ENCODE measurements at regions of chr3 and their contacts with region 1.

Region 1: GRCh38 chr3:141796081-141796888 is 33.1 kb downstream of the GRK7 start:
- DNase-seq: peak; percentile 74
- H3K4me3 Mint-ChIP-seq: peak overlapping the region; percentile 79
- H3K27ac Mint-ChIP-seq: peak overlapping the region; percentile 99
- H3K4me1 Mint-ChIP-seq: peaks cover 47% of the 10 kb centered on the region
- H3K27me3 Mint-ChIP-seq: peaks cover 3% of the 10 kb centered on the region

Region 2: GRCh38 chr3:141553055-141553454 is 243.2 kb before region 1 on chr3:
- intact Hi-C with region 1: loop called (anchors 2 kb)
- DNase-seq: peak; percentile 35
- H3K4me3 Mint-ChIP-seq: peak overlapping the region; percentile 38
- H3K27ac Mint-ChIP-seq: peak overlapping the region; percentile 93
- H3K4me1 Mint-ChIP-seq: peaks cover 52% of the 10 kb centered on the region
- H3K27me3 Mint-ChIP-seq: no peaks in the 10 kb centered on the region

Region 3: DNA sequence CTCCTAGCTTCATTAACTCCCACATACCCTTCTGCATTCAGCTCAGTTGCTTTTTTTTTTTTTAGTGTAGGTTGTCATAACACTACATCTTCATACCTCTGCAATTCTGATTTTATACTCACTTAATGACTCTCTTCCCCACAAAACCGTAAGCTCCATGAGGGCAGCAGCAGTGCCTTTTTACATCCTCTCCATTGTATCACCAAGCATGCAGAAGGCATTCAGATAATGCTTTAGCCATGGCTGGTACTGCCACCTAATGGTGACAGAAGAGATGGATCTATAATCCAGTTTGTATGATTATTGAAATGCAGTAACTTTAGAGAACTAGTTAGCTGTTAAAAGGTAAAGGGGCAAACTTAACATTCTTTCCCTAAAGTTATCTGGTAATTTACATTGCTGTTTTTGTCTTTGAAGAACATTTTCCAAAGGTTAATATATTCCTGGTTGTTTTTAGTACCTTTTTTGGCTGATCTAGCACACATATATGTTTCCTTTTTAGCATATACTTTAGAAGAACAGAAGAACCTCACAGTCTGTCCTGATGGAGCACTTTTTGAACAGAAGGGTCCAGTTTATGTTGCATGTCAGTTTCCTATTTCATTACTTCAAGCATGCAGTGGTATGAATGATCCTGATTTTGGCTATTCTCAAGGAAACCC is 117.0 kb after region 1 on chr3:
- intact Hi-C with region 1: loop called (anchors 1 kb)
- DNase-seq: peak; percentile 26
- H3K4me3 Mint-ChIP-seq: no peak overlapping the region
- H3K27ac Mint-ChIP-seq: no peak overlapping the region
- H3K4me1 Mint-ChIP-seq: peaks cover 4% of the 10 kb centered on the region
- H3K27me3 Mint-ChIP-seq: no peaks in the 10 kb centered on the region

Region 4: DNA sequence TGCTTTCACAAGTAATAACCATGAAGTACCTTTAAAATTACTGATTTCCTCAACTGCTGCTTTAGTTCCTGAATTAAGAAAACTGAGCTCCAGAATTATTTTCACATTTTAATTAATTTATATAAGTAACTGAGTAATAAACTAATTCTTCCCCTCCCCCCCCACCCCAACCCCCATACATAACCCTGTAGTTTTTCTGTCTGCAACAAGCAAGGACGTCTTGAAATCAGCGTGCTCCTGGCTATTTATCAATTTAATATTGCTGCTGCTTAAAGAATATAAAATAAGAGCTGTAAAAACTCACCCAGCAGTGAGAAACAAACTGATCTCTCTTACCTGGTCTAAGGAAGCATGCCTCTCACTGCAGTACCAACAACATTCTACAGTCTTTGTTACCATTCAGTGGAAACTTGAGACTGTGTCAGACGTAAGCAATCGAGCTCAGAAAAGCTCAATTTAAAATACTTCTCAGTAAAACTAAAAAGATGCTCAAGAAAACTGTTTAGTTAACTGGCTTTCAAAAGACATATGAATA is 232.0 kb after region 1 on chr3:
- intact Hi-C with region 1: loop called (anchors 5 kb)
- DNase-seq: peak; percentile 22
- H3K4me3 Mint-ChIP-seq: peak overlapping the region; percentile 87
- H3K27ac Mint-ChIP-seq: peak overlapping the region; percentile 49
- H3K4me1 Mint-ChIP-seq: peaks cover 18% of the 10 kb centered on the region
- H3K27me3 Mint-ChIP-seq: no peaks in the 10 kb centered on the region

Region 5: GRCh38 chr3:142226484-142226883 is 430.2 kb after region 1 on chr3:
- intact Hi-C with region 1: loop called (anchors 1 kb)
- DNase-seq: no peak
- H3K4me3 Mint-ChIP-seq: peak overlapping the region; percentile 72
- H3K27ac Mint-ChIP-seq: no peak overlapping the region
- H3K4me1 Mint-ChIP-seq: peaks cover 20% of the 10 kb centered on the region
- H3K27me3 Mint-ChIP-seq: no peaks in the 10 kb centered on the region

Measured in activated T-helper 1 cell treated with anti-CD3 and anti-CD28 coated beads, Interleukin-12 subunit alpha, Interleukin-12 subunit beta, Interleukin-2, Interleukin-4 antibody, amounts not matched to agents 30 ng/mL and 10 ng/mL and 1 ng/mL, durations not matched to agents 14 hours and 24 hours and 36 hours (primary cell).